ENCODE measurements at regions of chr7 and their contacts with region 1.

Region 1: DNA sequence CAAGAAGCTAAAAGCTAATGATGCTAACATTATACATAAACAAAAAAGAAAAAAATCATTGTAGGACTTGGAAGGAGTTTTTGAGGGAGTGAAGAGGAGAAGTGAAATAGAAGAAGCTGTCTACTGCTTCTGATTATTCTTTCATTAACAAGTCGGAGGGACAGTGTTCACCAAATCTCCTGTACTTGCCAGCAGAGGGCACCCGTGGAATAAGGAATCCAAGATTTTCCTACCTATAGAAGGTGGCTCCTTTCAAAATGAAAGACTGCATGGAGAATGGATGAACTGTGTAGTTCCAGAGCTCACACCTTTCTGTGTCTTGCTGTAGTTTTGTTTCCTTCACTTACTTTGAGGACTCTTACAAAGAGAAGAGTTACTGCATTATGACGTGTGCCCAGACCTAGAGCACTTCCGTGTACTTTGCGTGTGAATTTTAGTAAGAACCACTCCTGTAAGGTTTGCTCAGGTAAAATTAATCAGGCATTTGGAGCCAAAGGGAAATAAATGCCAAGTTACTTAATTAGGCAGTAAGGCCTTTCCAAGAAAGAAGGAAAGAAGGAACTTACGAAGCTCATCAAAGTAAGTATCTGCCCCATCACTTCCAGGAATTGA is 145.1 kb downstream of the SEMA3D start:
- DNase-seq: peak; percentile 83
- H3K4me3 ChIP-seq: no peak overlapping the region
- H3K27ac ChIP-seq: no peak overlapping the region
- H3K4me1 ChIP-seq: no peaks in the 10 kb centered on the region
- H3K27me3 ChIP-seq: no peaks in the 10 kb centered on the region
- CTCF ChIP-seq: peak; percentile 60 to 70
- POLR2A ChIP-seq: no peak

Region 2: GRCh38 chr7:84975586-84976185 is 66.0 kb before region 1 on chr7:
- CTCF ChIA-PET with region 1: no interaction called
- POLR2A ChIA-PET with region 1: no interaction called
- dilution Hi-C with region 1: no loop called
- intact Hi-C with region 1: no loop called
- DNase-seq: peak; percentile 64
- H3K4me3 ChIP-seq: no peak overlapping the region
- H3K27ac ChIP-seq: no peak overlapping the region
- H3K4me1 ChIP-seq: no peaks in the 10 kb centered on the region
- H3K27me3 ChIP-seq: no peaks in the 10 kb centered on the region
- CTCF ChIP-seq: no peak
- POLR2A ChIP-seq: no peak

Region 3: GRCh38 chr7:85014936-85015660 is 26.6 kb before region 1 on chr7:
- CTCF ChIA-PET with region 1: no interaction called
- POLR2A ChIA-PET with region 1: no interaction called
- dilution Hi-C with region 1: no loop called
- intact Hi-C with region 1: no loop called
- DNase-seq: no peak
- H3K4me3 ChIP-seq: no peak overlapping the region
- H3K27ac ChIP-seq: no peak overlapping the region
- H3K4me1 ChIP-seq: no peaks in the 10 kb centered on the region
- H3K27me3 ChIP-seq: no peaks in the 10 kb centered on the region
- CTCF ChIP-seq: peak in 1 of 2 donors; percentile 3
- POLR2A ChIP-seq: no peak

Region 4: DNA sequence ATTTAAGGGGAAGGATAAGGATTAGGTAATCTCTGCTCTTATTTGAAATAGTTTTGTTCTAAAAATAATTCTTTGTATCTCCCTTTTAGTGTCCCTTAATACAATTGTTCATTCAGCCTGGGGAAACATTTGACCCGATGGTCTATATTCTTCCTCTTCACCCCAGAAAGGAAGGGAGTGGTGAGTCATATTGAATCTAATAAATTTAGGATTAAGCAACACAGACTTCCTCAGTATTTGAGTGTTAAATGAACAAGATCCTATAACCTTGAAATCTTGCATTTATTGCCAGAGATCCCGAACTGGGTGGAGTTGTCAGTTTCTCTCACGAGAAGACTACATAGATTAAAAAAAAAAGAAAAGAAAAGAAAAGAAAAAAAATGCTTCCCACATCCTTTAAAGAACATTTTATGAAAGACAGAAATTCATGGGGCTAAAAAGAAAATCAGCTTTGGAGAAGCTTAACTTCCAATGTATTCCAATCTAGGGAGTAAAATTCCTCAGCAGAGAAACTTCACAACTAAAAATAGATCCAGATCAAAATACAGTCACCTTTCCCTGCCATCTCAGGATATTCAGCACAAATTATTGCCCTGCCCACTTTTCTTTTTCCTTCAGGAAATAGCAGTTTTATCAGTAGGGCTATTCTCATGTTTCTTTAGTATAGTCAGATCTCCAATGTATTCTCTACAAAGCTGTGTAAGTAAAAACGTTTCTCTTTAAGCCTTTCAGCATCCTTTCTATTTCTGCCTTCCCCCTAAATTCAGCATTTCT is 62.9 kb after region 1 on chr7:
- CTCF ChIA-PET with region 1: interaction called, 12 read pairs
- POLR2A ChIA-PET with region 1: no interaction called
- dilution Hi-C with region 1: no loop called
- intact Hi-C with region 1: no loop called
- DNase-seq: peak; percentile 80
- H3K4me3 ChIP-seq: peak overlapping the region in 1 of 3 experiments; percentile 45
- H3K27ac ChIP-seq: peak overlapping the region; percentile 53
- H3K4me1 ChIP-seq: peaks cover 52% of the 10 kb centered on the region
- H3K27me3 ChIP-seq: no peaks in the 10 kb centered on the region
- CTCF ChIP-seq: no peak
- POLR2A ChIP-seq: no peak

Region 5: DNA sequence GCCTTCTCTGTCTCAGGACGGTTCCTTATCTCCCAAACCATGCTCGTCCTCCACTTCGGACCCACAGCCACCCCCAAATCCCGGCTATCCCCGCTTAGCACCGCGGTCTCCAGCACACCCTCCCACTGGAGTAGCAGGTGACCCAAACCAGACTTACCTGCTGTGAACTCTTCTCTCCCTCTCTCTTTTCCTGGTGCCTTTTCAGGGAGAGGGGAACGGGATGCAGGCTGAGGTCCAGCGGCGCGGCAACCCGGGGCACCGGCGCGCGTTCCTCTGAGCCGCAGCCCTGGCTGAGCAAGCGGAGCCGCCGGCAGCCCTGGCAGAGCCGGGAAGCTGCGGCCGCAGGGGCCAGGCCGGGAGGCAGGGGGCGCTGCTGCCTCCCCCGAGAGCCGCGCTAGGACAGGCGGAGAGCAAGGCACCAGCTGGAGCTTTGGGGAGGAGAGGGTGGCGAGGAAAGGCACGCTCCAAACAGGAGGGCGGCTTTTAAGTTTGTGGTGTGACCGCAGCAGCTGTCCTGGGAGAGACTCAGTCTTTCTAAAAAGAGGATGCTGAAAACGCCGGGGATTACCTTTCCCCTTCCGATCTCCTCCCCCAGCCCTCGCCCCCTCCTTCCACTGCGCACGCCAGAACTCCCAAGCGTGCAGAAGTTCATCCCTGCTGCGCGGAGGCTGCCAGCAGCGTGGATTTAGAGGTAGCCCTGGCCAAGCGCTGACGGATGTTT is 145.0 kb after region 1 on chr7 and contains the start of gene SEMA3D:
- CTCF ChIA-PET with region 1: interaction called, 154 read pairs
- POLR2A ChIA-PET with region 1: no interaction called
- dilution Hi-C with region 1: no loop called
- intact Hi-C with region 1: loop called (anchors 1 kb)
- DNase-seq: peak; percentile 87
- H3K4me3 ChIP-seq: peak within 1 kb of the TSS; percentile 52 to 79 (median 54)
- H3K27ac ChIP-seq: peak within 1 kb of the TSS; percentile 40
- H3K4me1 ChIP-seq: peaks cover 5% of the 10 kb centered on the region
- H3K27me3 ChIP-seq: no peaks in the 10 kb centered on the region
- CTCF ChIP-seq: peak; percentile 92 to 98
- POLR2A ChIP-seq: no peak
- total RNA-seq, gene SEMA3D: 10.3 and 14.1 TPM in 2 replicates

Region 6: GRCh38 chr7:85554236-85555178 is 512.8 kb after region 1 on chr7:
- CTCF ChIA-PET with region 1: interaction called, 56 read pairs
- POLR2A ChIA-PET with region 1: no interaction called
- dilution Hi-C with region 1: no loop called
- intact Hi-C with region 1: loop called (anchors 1 kb)
- DNase-seq: peak; percentile 63
- H3K4me3 ChIP-seq: no peak overlapping the region
- H3K27ac ChIP-seq: no peak overlapping the region
- H3K4me1 ChIP-seq: no peaks in the 10 kb centered on the region
- H3K27me3 ChIP-seq: no peaks in the 10 kb centered on the region
- CTCF ChIP-seq: peak; percentile 44 to 49
- POLR2A ChIP-seq: no peak

Region 7: GRCh38 chr7:85851571-85852193 is 810.0 kb after region 1 on chr7:
- CTCF ChIA-PET with region 1: interaction called, 14 read pairs
- POLR2A ChIA-PET with region 1: no interaction called
- dilution Hi-C with region 1: no loop called
- intact Hi-C with region 1: no loop called
- DNase-seq: peak; percentile 42
- H3K4me3 ChIP-seq: no peak overlapping the region
- H3K27ac ChIP-seq: no peak overlapping the region
- H3K4me1 ChIP-seq: no peaks in the 10 kb centered on the region
- H3K27me3 ChIP-seq: no peaks in the 10 kb centered on the region
- CTCF ChIP-seq: peak; percentile 6 to 11
- POLR2A ChIP-seq: no peak